ENCODE measurements at regions of chr5 and their contacts with region 1.

Region 1: GRCh38 chr5:103139264-103139865 is 19.3 kb downstream of the PPIP5K2 start:
- DNase-seq: peak in 1 of 2 donors; percentile 84
- H3K4me3 ChIP-seq: no peak overlapping the region
- H3K27ac ChIP-seq: no peak overlapping the region
- H3K4me1 ChIP-seq: no peaks in the 10 kb centered on the region
- H3K27me3 ChIP-seq: no peaks in the 10 kb centered on the region
- CTCF ChIP-seq: peak; percentile 82 to 94 (median 85)

Region 2: DNA sequence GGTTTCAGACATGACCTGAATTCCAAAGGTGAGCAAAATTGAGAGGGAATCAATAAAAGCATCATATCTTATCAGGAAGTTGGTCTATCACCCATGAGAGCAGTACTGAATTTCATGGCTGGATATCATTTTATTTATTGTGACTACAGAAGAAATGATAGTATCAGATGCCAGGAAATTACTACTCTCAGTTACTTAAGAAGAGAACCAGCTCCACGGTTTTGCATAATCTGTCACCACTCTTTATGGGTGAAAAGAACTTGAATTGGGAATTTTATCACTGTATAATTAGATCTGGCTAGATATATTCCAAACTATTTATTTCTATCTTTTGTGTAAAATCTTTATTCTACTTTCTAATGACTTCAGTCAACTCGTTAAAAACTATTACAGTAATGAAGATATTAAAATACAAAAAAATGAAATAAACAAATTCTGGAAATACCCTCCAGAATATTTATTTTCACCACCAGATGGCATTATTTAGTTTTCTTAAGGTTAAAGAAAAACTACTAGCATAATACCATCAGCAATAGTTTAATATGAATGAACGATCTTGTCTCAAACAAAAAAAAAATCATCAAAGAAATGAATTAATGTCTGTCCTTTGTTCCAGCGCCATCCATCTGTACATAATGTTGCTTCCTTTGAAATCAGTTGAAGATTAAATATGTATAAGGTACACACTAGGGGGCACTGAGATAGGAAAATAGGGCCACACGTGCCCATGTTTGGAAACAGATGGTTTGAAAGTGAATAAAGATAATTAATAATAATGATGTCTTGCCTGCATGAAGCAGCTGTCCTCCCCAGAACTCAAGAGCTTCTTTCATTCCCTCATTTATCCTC is 555.9 kb before region 1 on chr5:
- intact Hi-C with region 1: loop called (anchors 5 kb)
- DNase-seq: no peak
- H3K4me3 ChIP-seq: no peak overlapping the region
- H3K27ac ChIP-seq: no peak overlapping the region
- H3K4me1 ChIP-seq: peaks cover 0 to 3% of the 10 kb centered on the region in 2 donors
- H3K27me3 ChIP-seq: no peaks in the 10 kb centered on the region
- CTCF ChIP-seq: peak; percentile 15 to 58 (median 42)

Region 3: DNA sequence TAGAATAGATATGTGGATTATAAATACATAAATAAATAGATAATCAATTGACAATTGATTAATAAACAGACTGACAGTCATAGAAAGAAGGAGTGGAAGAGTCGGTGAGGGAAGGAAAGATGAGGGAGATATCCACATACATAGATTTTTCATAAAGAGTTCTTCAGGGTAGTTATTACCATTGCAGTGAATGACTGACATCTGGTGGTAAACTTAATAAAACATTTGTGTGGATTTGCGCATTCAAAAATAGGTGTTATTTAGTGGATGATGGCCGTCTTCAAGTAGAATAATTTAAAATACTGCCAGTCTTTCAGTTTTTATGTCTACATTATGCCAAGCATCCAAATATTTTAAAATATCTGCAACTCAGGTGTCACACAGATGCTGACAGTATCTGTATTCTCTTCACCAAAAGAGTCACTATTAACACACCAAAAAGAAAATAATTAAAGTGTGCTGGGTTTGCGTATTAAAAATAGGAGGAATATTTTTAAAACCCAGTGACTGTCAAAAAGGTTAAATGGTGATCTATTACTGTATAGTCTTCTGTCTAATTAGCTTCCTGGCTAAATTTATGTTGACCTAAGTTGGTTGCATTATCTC is 98.2 kb before region 1 on chr5:
- intact Hi-C with region 1: loop called (anchors 2 kb)
- DNase-seq: no peak
- H3K4me3 ChIP-seq: peak overlapping the region in 1 of 2 donors; percentile 20
- H3K27ac ChIP-seq: no peak overlapping the region
- H3K4me1 ChIP-seq: no peaks in the 10 kb centered on the region
- H3K27me3 ChIP-seq: no peaks in the 10 kb centered on the region
- CTCF ChIP-seq: peak; percentile 36 to 71 (median 68)

Region 4: DNA sequence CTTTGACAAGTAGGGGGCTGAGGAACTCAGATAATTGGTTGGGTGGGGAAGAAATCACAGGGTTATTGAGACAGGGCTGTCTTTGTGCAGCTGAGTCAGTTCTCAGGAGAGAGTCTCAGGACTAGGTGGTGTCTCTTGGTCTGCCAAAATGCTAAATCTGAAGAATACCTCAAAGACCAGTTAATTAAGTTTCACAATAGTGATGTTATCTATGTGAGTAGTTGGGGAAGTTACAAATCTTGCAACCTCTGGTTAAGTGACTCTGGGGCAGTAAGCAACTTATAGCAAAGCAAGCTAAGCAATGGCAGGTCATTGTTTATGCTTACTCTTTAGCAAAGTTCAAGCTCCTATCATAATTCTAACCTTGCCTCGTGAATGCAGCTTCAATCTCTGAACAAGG is 73.0 kb before region 1 on chr5:
- intact Hi-C with region 1: loop called (anchors 2 kb)
- DNase-seq: no peak
- H3K4me3 ChIP-seq: no peak overlapping the region
- H3K27ac ChIP-seq: no peak overlapping the region
- H3K4me1 ChIP-seq: no peaks in the 10 kb centered on the region
- H3K27me3 ChIP-seq: no peaks in the 10 kb centered on the region
- CTCF ChIP-seq: no peak

Region 5: DNA sequence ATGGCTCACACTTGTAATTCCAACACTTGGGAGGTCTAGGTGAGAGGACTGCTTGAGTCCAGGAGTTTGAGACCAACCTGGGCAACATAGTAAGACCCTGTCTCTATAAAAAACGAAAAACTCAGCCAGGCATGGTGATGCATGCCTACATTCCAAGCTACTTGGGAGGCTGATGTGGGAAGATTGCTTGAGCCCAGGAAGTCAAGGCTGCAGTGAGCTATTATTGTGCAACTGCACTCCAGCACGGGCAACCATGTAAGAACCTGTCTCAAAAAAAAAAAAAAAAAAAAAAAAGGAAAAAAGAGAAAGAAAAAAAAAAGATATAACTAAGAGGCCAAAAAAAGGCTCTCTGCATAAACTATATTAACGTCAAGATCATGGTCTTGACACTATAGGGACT is 46.7 kb before region 1 on chr5:
- intact Hi-C with region 1: no loop called
- DNase-seq: peak in 1 of 2 donors; percentile 66
- H3K4me3 ChIP-seq: no peak overlapping the region
- H3K27ac ChIP-seq: peak overlapping the region; percentile 79 to 88
- H3K4me1 ChIP-seq: peaks cover 12 to 22% of the 10 kb centered on the region in 2 donors
- H3K27me3 ChIP-seq: no peaks in the 10 kb centered on the region
- CTCF ChIP-seq: no peak

Region 6: DNA sequence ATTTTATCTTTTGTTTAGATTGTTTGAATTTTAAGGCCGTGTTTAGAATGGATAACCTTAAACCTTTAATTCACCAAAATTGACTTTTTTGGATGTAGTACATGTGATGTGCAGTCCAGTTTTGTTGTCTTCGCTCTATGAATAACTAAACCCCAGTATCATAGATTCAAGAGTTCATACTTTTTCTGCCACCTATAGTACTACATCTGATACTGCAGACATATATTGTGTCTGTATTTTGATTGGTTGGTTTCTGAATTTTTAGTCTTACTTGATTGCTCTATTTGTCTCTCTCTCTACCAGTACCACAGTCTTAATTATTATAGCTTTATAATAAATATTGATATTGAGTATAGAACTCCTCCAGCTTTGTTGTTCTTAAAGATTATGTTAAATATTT is 38.8 kb after region 1 on chr5:
- intact Hi-C with region 1: no loop called
- DNase-seq: no peak
- H3K4me3 ChIP-seq: no peak overlapping the region
- H3K27ac ChIP-seq: no peak overlapping the region
- H3K4me1 ChIP-seq: no peaks in the 10 kb centered on the region
- H3K27me3 ChIP-seq: no peaks in the 10 kb centered on the region
- CTCF ChIP-seq: no peak

Measured in ascending aorta (tissue), 2 donors.